Calu3 (cell line): ENCODE measurements at regions of chr3 and their contacts with region 1.

Region 1: GRCh38 chr3:128780101-128780837 is 54.3 kb downstream of the RAB7A start:
- DNase-seq: no peak
- H3K4me3 Mint-ChIP-seq: no peak overlapping the region
- H3K27ac Mint-ChIP-seq: peak overlapping the region; percentile 11
- H3K4me1 Mint-ChIP-seq: peaks cover 75% of the 10 kb centered on the region
- H3K27me3 Mint-ChIP-seq: no peaks in the 10 kb centered on the region
- CTCF ChIP-seq: no peak

Region 2: DNA sequence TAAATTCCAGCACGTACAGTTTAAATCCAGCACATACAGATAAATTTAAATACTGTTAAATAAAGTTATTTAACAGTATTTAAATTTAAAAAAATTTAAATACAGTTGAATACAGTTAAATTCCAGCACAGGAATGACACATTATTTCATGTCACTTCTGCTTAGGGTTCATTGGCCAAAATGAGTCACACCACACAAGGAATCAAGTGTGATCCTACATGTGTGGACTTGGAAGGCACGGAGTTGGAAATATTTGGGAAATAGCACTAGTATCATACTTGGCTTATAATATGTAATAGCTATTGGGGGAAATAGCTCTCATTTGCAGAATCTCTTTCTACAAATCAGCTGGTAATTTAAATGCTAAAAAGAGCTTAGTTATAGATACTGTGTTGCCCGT is 43.7 kb before region 1 on chr3:
- CTCF ChIA-PET with region 1: interaction called, 3 read pairs
- intact Hi-C with region 1: loop called (anchors 5 kb)
- DNase-seq: no peak
- H3K4me3 Mint-ChIP-seq: no peak overlapping the region
- H3K27ac Mint-ChIP-seq: no peak overlapping the region
- H3K4me1 Mint-ChIP-seq: peaks cover 49% of the 10 kb centered on the region
- H3K27me3 Mint-ChIP-seq: no peaks in the 10 kb centered on the region
- CTCF ChIP-seq: no peak